ENCODE measurements at regions of chr12 and their contacts with region 1.

Region 1: GRCh38 chr12:117857632-117858612 is 110.9 kb downstream of the KSR2 start:
- DNase-seq: peak; percentile 83
- ATAC-seq: peak; percentile 64
- H3K4me3 Mint-ChIP-seq: no peak overlapping the region
- H3K27ac Mint-ChIP-seq: no peak overlapping the region
- H3K4me1 Mint-ChIP-seq: 0 out of 2 replicates have a peak, but pooled peaks cover 2% of the 10 kb centered on the region
- H3K27me3 Mint-ChIP-seq: no peaks in the 10 kb centered on the region
- CTCF ChIP-seq: peak; percentile 80

Region 2: GRCh38 chr12:117587631-117588287 is 270.2 kb before region 1 on chr12:
- CTCF ChIA-PET with region 1: interaction called, 25 read pairs
- POLR2A ChIA-PET with region 1: no interaction called
- DNase-seq: peak; percentile 81
- ATAC-seq: peak; percentile 86
- H3K4me3 Mint-ChIP-seq: no peak overlapping the region
- H3K27ac Mint-ChIP-seq: no peak overlapping the region
- H3K4me1 Mint-ChIP-seq: peaks cover 39% of the 10 kb centered on the region
- H3K27me3 Mint-ChIP-seq: no peaks in the 10 kb centered on the region
- CTCF ChIP-seq: peak; percentile 91

Region 3: DNA sequence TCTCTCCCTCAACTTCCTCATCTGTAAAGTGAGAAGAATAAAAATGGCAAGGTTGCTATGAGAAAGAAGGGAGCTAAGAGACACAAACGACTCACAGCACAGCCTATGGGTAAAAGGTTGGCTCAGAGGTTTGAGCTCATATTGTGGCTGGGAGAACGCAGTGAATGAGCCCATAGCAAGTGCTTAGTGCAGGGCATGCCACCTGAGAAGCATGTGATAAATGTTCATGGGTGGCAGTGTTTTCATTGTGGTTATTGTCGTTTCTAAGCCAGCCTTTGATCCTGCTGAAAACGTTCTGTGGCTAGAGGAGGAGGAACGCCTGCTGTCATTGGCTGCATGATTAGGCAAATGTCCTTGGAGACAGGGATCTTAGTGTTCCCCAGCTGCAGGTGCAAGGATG is 39.5 kb before region 1 on chr12:
- CTCF ChIA-PET with region 1: interaction called, 11 read pairs
- POLR2A ChIA-PET with region 1: no interaction called
- DNase-seq: no peak
- ATAC-seq: no peak
- H3K4me3 Mint-ChIP-seq: no peak overlapping the region
- H3K27ac Mint-ChIP-seq: no peak overlapping the region
- H3K4me1 Mint-ChIP-seq: peaks cover 13% of the 10 kb centered on the region
- H3K27me3 Mint-ChIP-seq: no peaks in the 10 kb centered on the region
- CTCF ChIP-seq: no peak

Region 4: DNA sequence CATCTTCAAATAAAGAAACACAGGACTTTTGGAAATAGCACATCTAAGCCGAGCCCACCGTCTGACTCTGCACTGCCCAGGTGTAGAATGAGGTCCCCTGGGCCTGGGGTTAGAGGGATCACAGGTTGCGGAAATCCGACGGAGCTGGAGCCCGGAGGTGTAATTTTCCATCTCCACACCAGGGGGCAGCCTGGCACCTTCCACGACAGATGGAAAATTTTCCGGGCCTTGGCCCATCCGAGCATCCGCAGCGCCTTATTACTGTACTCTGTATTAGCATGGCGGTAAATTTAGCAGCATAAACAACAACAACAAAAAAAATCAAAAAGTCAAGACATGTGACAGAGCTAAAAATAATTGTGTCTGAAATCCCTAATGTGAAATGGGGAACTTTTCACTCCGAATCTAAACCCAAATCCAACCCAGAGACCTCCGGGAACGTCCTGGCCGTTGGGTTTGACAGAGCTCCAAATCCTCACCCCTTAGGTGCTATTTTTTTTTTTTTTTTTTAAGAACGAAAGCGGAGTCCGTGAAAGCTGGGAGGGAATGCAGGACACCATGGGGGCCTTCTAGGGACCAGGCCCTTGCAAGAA is 17.0 kb after region 1 on chr12:
- CTCF ChIA-PET with region 1: interaction called, 20 read pairs
- POLR2A ChIA-PET with region 1: interaction called, 3 read pairs
- DNase-seq: peak; percentile 88
- ATAC-seq: peak; percentile 81
- H3K4me3 Mint-ChIP-seq: no peak overlapping the region
- H3K27ac Mint-ChIP-seq: no peak overlapping the region
- H3K4me1 Mint-ChIP-seq: peaks cover 22% of the 10 kb centered on the region
- H3K27me3 Mint-ChIP-seq: no peaks in the 10 kb centered on the region
- CTCF ChIP-seq: peak; percentile 94

Region 5: GRCh38 chr12:118035246-118036041 is 177.5 kb after region 1 on chr12:
- CTCF ChIA-PET with region 1: interaction called, 12 read pairs
- POLR2A ChIA-PET with region 1: no interaction called
- DNase-seq: no peak
- ATAC-seq: peak; percentile 34; the same call in 1 of the 2 replicates
- H3K4me3 Mint-ChIP-seq: no peak overlapping the region
- H3K27ac Mint-ChIP-seq: peak overlapping the region; percentile 60
- H3K4me1 Mint-ChIP-seq: no peaks in the 10 kb centered on the region; the same call in 1 of the 2 replicates
- H3K27me3 Mint-ChIP-seq: no peaks in the 10 kb centered on the region
- CTCF ChIP-seq: no peak

Region 6: DNA sequence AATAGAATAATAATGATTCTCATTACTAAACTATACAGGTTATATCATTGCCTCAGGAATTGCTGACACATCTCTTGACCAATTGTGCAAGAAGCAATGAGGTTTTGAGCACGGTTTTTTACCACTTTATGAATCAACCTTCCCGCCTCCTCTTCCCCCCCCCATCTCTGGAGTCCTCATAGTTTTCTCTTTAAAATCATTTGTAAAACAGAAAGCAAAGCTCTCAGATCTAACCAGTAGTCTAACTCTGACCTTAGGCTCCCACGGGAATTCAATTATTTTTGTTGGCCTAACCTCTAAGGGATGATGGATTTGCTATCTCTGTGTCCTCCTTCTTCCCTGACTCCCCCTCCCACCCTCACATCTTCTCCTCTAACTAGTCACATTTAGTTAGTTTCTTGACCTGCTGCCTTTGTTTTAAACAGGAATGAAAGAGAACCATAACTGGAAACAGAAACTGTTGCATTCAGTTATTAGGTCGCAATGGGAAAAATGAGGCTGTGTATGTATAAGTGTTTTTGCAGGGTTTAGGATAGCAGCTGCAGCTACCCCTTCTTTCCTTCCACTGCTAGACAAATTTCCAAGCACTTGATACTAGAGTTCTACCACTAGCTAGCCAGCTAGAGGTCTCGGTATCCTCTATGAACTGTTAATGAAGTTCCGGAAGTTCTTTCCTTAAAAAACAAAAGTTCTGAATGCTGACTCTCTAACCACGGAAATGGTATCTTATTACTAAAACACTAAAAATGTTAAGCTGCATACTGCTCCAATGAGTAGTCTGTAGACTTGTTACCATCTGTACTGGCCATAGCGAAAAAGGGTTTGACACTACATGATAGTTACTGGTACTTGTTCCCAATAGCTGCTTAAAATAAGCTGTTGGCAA is 449.4 kb after region 1 on chr12:
- CTCF ChIA-PET with region 1: no interaction called
- POLR2A ChIA-PET with region 1: no interaction called
- DNase-seq: no peak
- ATAC-seq: no peak
- H3K4me3 Mint-ChIP-seq: no peak overlapping the region
- H3K27ac Mint-ChIP-seq: no peak overlapping the region
- H3K4me1 Mint-ChIP-seq: peaks cover 8% of the 10 kb centered on the region
- H3K27me3 Mint-ChIP-seq: no peaks in the 10 kb centered on the region
- CTCF ChIP-seq: no peak